Activated CD4-positive, alpha-beta memory T cell treated with anti-CD3 and anti-CD28 coated beads, Interleukin-2, amount 10 ng/mL, durations not matched to agents 7 days and 5 days (primary cell): ENCODE measurements at regions of chr22 and their contacts with region 1.

Region 1: DNA sequence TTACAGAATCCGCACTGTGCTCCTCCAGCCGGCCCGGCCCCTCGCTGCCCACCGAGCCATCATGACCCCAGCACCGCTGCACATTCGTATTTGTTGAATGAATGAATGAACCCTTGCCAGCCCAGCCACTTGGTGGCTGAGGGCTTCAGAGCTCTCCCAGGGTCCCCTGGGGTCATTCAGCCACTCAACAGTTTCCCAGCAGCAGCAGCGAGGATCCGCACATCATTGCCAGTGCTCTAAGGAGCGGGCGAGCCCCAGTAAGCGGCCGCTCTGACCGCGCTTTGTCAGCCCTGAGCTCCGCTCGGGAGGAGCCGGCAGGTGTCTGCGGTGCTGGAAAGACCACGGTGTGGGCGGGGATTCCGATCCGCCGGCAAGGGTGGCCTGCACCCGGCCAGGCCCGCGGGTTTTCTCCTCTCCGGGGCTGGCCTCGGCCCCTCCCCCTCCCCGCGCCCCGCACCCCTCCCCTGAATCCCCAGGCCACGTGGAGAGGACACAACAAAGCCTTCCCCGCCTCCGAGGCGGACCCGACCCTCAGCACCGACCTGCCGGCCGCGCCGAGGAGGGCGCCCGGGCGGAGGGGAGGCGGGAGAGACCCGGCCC is 563 bp downstream of the BID start:
- DNase-seq: peak; percentile 75
- H3K4me3 Mint-ChIP-seq: peak overlapping the region; percentile 79
- H3K27ac Mint-ChIP-seq: no peak overlapping the region
- H3K4me1 Mint-ChIP-seq: peaks cover 52% of the 10 kb centered on the region
- H3K27me3 Mint-ChIP-seq: peaks cover 33% of the 10 kb centered on the region

Region 2: DNA sequence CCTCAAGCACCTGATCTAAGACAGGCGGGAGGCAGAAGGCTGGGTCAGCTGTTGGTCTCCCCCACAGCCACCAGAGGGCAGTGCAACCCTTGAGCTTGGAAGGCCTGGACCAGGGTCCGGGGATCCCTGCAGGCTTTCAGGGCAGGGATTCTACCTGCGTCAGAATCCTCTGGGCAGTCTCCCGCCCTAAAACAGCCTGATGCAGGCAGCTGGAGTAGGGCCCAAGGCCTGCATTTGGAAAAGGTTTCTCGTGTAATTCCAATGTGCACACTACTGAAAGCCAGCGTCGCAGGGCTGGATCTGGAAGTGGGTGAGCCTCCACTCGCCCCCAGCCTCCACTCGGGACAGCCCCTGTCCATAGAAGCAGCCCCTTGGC is 31.2 kb before region 1 on chr22:
- CTCF ChIA-PET with region 1: interaction called, 18 read pairs
- POLR2A ChIA-PET with region 1: interaction called, 3 read pairs
- DNase-seq: peak; percentile 66
- H3K4me3 Mint-ChIP-seq: no peak overlapping the region
- H3K27ac Mint-ChIP-seq: no peak overlapping the region
- H3K4me1 Mint-ChIP-seq: no peaks in the 10 kb centered on the region
- H3K27me3 Mint-ChIP-seq: no peaks in the 10 kb centered on the region

Region 3: GRCh38 chr22:17797721-17798559 is 24.2 kb after region 1 on chr22:
- CTCF ChIA-PET with region 1: no interaction called
- POLR2A ChIA-PET with region 1: no interaction called
- DNase-seq: no peak
- H3K4me3 Mint-ChIP-seq: no peak overlapping the region
- H3K27ac Mint-ChIP-seq: no peak overlapping the region
- H3K4me1 Mint-ChIP-seq: peaks cover 3% of the 10 kb centered on the region
- H3K27me3 Mint-ChIP-seq: no peaks in the 10 kb centered on the region